HepG2 (cell line): ENCODE measurements at regions of chr2 and their contacts with region 1.

Region 1: DNA sequence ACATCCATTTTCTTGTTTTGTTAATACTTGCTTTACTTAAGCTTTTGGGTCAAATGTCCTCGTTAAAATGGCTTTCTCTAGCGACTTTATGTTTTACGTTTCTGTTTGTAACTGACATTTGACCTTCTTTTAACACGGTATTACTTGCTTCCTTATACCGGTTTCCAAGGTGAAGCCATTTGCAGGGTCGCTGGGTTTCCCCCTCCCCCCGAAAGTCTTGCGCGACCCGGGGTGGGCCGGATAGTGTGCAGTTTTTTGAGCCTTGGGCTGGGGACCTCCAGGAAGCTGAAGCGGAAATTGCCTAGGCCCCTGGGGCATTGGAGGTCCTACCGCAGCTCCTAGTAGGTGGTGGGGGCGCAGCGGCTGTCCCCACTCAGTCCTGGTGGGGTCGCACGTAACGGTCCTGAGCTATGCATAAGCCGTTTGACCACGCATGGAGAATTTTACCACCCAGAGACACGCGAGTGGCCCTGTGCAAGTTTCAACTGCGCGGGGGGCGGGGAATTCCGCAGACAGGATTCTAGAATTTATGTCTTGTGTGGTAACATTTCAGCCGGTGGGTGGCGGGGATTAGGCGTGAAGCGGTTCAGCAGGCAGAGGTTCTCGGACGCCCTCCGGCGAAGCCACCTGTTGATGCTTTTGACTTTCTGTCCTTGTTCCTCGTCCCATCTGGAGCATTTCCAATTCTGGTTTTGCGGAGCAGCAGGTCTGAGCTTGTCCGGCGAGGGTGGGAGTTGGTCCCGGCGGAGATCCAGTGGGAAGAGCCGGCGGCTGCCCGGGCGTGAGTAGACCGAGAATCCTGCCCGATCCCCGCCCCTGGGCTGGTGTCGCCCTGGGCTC is 2.4 kb downstream of the CFLAR start:
- DNase-seq: peak; percentile 88
- ATAC-seq: peak; percentile 47
- H3K4me3 ChIP-seq: peak overlapping the region; percentile 86 to 90 (median 86)
- H3K27ac ChIP-seq: peak overlapping the region; percentile 91
- H3K4me1 ChIP-seq: peaks cover 68% of the 10 kb centered on the region
- H3K27me3 ChIP-seq: no peaks in the 10 kb centered on the region; a peak in 2 of 5 replicates
- CTCF ChIP-seq: peak; percentile 78
- EP300 ChIP-seq: no peak; a peak in 1 of 4 replicates
- POLR2A ChIP-seq: peak; percentile 61 to 68
- RAD21 ChIP-seq: peak; percentile 68

Region 2: GRCh38 chr2:200901459-200902072 is 216.8 kb before region 1 on chr2:
- CTCF ChIA-PET with region 1: no interaction called
- POLR2A ChIA-PET with region 1: no interaction called
- in situ Hi-C with region 1: no loop called
- intact Hi-C with region 1: loop called (anchors 1 kb)
- DNase-seq: peak; percentile 94
- ATAC-seq: peak; percentile 97
- H3K4me3 ChIP-seq: no peak overlapping the region
- H3K27ac ChIP-seq: no peak overlapping the region
- H3K4me1 ChIP-seq: no peaks in the 10 kb centered on the region
- H3K27me3 ChIP-seq: no peaks in the 10 kb centered on the region
- CTCF ChIP-seq: peak; percentile 92
- EP300 ChIP-seq: no peak
- POLR2A ChIP-seq: no peak
- RAD21 ChIP-seq: peak; percentile 87

Region 3: DNA sequence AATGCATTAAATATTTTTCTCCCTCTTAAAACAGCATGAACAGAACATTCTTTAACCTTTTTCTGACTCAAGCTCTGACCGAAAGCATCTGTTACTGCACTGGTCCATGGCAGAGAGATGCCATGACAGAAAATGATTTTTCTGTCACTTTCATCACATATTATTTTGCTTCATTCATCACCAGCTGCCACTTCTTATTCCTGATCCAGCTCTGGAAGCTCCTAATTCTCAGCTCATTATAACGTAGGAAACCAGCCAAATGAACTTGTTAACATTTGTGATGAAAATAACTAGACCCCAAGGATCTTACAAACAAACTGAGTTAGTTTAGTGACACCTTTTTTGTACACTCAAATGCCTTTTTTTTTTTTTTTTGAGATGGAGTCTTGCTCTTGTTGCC is 10.0 kb before region 1 on chr2:
- CTCF ChIA-PET with region 1: no interaction called
- POLR2A ChIA-PET with region 1: interaction called, 11 read pairs
- in situ Hi-C with region 1: no loop called
- intact Hi-C with region 1: no loop called
- DNase-seq: no peak
- ATAC-seq: no peak
- H3K4me3 ChIP-seq: no peak overlapping the region
- H3K27ac ChIP-seq: no peak overlapping the region
- H3K4me1 ChIP-seq: peaks cover 34% of the 10 kb centered on the region
- H3K27me3 ChIP-seq: no peaks in the 10 kb centered on the region
- CTCF ChIP-seq: no peak
- EP300 ChIP-seq: no peak
- POLR2A ChIP-seq: no peak
- RAD21 ChIP-seq: no peak

Region 4: GRCh38 chr2:201144101-201145051 is 26.0 kb after region 1 on chr2:
- CTCF ChIA-PET with region 1: no interaction called
- POLR2A ChIA-PET with region 1: interaction called, 75 read pairs
- in situ Hi-C with region 1: no loop called
- intact Hi-C with region 1: no loop called
- DNase-seq: peak; percentile 70
- ATAC-seq: peak; percentile 85
- H3K4me3 ChIP-seq: no peak overlapping the region
- H3K27ac ChIP-seq: peak overlapping the region; percentile 20
- H3K4me1 ChIP-seq: peaks cover 29% of the 10 kb centered on the region
- H3K27me3 ChIP-seq: no peaks in the 10 kb centered on the region
- CTCF ChIP-seq: no peak
- EP300 ChIP-seq: no peak
- POLR2A ChIP-seq: no peak
- RAD21 ChIP-seq: no peak

Region 5: DNA sequence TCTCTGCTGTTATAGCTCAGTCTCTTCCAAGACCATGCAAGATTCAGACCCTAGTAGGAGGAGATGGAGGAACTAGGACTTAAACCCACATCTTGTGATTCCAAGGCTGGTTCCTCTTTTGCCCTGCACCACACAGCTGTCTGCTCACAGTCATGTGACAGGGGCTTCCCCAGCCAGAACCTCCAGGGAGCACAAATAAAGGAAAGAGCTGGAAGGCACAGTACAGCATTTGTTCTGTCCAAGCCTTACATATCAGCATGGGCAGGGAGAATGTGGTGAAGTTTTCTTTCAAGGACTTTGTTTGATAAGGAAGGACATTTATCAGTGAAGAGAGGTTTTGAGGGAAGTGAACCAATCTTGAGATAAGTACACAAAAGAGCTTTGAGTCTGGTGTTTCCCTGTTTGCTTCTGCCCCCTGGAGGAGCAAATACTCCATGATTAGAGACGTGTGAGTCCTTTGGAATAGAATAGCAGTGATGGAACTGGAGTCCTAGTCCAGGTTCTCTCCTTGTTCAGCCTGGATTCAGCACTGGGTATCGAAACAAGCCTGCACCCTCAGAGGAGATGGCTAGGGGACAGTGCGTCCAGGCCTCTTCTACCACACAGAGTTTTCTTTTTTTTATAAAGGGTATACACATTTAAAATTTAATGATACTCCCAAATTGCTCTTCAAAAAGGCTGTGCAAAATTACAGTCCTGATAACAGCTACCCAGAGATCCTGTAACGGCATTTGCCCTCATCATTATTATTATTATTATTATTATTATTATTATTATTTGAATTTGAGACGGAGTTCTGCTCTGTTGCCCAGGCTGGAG is 40.0 kb after region 1 on chr2:
- CTCF ChIA-PET with region 1: interaction called, 9 read pairs
- POLR2A ChIA-PET with region 1: interaction called, 53 read pairs
- in situ Hi-C with region 1: no loop called
- intact Hi-C with region 1: loop called (anchors 1 kb)
- DNase-seq: peak; percentile 91
- ATAC-seq: peak; percentile 95
- H3K4me3 ChIP-seq: no peak overlapping the region
- H3K27ac ChIP-seq: peak overlapping the region; percentile 17
- H3K4me1 ChIP-seq: peaks cover 10% of the 10 kb centered on the region
- H3K27me3 ChIP-seq: no peaks in the 10 kb centered on the region
- CTCF ChIP-seq: peak; percentile 92
- EP300 ChIP-seq: no peak
- POLR2A ChIP-seq: no peak
- RAD21 ChIP-seq: peak; percentile 89

Region 6: DNA sequence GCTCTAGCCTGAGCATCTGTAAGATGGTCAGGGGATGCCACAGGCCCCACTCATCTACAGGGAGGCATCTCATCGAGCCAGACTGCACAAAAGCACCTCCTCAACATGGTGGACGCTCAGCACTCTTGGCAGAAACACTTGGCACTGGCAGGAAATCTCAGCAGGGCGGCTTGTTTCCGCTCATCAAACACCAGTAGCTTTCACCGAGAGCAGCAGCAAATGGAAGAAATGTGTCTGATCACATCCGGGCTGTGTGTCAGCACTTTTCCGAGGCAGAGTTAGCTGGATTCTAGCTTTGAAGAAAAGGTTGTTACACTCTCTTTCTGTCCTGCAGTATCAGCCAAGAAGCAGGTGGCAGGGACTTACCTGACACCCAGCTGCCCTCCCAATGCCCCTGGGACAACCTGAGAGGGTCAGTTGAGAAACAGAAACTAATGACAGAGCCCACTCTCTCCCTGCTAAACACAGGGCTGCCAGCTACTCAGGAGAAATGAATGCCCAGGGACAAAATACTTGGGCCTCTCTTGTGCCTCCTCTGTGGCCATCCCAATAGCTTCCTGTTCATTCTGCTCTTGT is 846.4 kb after region 1 on chr2:
- CTCF ChIA-PET with region 1: no interaction called
- POLR2A ChIA-PET with region 1: no interaction called
- in situ Hi-C with region 1: no loop called
- intact Hi-C with region 1: no loop called
- DNase-seq: no peak
- ATAC-seq: no peak
- H3K4me3 ChIP-seq: no peak overlapping the region
- H3K27ac ChIP-seq: no peak overlapping the region
- H3K4me1 ChIP-seq: no peaks in the 10 kb centered on the region
- H3K27me3 ChIP-seq: peaks cover 0 to 25% of the 10 kb centered on the region in 2 experiments; a peak in 3 of 5 replicates
- CTCF ChIP-seq: no peak
- EP300 ChIP-seq: no peak
- POLR2A ChIP-seq: no peak
- RAD21 ChIP-seq: no peak